ENCODE measurements at regions of chr6 and their contacts with region 1.

Region 1: DNA sequence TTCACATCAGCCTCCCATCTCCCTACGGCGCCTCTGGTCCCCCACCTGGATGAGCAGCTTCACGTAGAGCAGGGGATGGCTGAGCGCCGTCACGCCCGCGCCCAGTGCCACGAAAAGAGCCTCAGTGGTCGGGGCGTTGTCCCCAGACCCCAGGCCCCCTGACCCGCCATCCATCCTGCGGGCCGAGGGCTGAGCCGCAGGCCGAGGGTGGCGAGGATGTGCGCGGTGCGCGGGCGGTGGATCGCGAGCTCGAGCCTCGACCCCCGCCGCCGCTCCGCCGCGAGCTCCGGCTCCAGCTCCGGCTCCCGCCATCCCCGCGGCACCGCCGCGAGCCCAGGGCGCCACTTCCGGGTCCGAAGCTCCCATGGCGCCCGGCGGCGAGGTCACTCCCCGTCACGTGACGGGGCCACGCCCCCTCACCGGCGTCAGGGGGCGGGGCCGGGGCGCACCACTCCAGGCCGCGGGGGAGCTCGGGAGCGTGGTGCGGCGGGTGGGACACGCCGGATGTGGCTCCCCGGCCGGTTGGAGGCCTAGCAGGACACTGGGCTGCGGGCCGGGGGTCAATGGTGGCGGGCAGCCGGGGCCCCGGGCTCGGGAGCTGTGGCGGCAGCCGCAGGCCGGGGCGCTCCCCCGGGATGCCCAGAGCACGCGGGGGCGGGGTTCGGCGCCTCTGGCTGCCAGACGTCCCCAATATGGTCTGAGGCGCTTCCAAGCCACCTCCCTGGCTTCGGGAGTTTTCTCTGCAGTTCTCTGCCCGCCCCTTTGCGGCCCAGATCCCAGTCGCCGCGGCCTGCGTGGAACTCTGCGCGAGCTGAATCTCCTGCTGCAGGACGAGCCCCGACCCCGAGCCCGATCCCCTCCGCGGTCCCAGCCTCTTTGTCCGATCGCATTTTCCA is at the start of gene MTCH1:
- DNase-seq: peak; percentile 64 to 91
- H3K4me3 ChIP-seq: peak within 1 kb of the TSS; percentile 99
- H3K27ac ChIP-seq: peak within 1 kb of the TSS; percentile 40
- H3K4me1 ChIP-seq: peaks cover 23% of the 10 kb centered on the region
- H3K27me3 ChIP-seq: no peaks in the 10 kb centered on the region
- CTCF ChIP-seq: 0 out of 2 replicates have a peak, but pooled peaks have one; percentile 3
- total RNA-seq, gene MTCH1: 236 and 241 TPM in 2 replicates

Region 2: GRCh38 chr6:36929607-36930006 is 56.4 kb before region 1 on chr6:
- CTCF ChIA-PET with region 1: no interaction called
- POLR2A ChIA-PET with region 1: interaction called, 16 read pairs
- intact Hi-C with region 1: loop called (anchors 2 kb)
- DNase-seq: peak in 1 of 2 experiments; percentile 69
- H3K4me3 ChIP-seq: no peak overlapping the region
- H3K27ac ChIP-seq: peak overlapping the region; percentile 4; the same call in 1 of the 2 replicates
- H3K4me1 ChIP-seq: peaks cover 49% of the 10 kb centered on the region
- H3K27me3 ChIP-seq: no peaks in the 10 kb centered on the region
- CTCF ChIP-seq: no peak

Region 3: DNA sequence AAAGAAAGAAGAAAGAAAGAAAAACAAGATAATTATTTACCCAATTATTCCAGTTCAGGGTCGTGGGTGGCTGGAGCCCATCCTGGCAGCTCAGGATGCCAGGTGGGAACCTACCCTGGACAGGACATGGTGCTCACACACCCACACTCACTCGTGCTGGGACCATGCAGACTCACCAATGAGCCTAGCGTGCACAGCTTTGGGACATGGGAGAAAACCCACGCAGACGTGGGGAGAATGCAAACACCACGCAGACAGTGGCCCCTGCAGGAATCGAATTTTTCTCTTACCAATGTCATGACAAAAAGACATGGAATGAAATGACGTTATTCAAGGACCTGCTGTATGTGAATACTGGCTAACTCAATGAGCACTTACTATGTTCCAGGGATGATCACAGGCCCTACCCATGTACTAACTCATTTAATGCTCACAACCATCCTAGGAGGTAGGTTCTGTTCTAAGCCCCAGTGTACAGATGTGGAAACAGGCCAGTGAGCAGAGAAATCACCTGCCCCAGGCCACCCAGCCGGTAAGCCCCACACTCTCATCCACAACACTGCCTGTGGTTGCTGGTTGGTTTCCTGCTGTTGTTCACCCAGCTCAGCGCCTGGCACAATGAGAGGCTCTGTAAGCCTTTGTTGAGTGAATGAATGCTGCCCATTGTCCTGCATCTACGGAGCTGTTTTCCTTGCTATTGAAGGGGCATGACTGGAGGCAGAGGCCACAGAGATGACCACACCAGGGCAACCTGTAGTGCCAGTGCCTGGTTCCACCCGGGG is 38.3 kb before region 1 on chr6:
- CTCF ChIA-PET with region 1: no interaction called
- POLR2A ChIA-PET with region 1: interaction called, 4 read pairs
- intact Hi-C with region 1: loop called (anchors 2 kb)
- DNase-seq: no peak
- H3K4me3 ChIP-seq: no peak overlapping the region
- H3K27ac ChIP-seq: no peak overlapping the region
- H3K4me1 ChIP-seq: peaks cover 35% of the 10 kb centered on the region
- H3K27me3 ChIP-seq: no peaks in the 10 kb centered on the region
- CTCF ChIP-seq: no peak

Region 4: GRCh38 chr6:37182736-37183590 is 196.9 kb after region 1 on chr6:
- CTCF ChIA-PET with region 1: no interaction called
- POLR2A ChIA-PET with region 1: no interaction called
- intact Hi-C with region 1: no loop called
- DNase-seq: no peak
- H3K4me3 ChIP-seq: no peak overlapping the region
- H3K27ac ChIP-seq: no peak overlapping the region
- H3K4me1 ChIP-seq: no peaks in the 10 kb centered on the region
- H3K27me3 ChIP-seq: no peaks in the 10 kb centered on the region
- CTCF ChIP-seq: no peak

Region 5: DNA sequence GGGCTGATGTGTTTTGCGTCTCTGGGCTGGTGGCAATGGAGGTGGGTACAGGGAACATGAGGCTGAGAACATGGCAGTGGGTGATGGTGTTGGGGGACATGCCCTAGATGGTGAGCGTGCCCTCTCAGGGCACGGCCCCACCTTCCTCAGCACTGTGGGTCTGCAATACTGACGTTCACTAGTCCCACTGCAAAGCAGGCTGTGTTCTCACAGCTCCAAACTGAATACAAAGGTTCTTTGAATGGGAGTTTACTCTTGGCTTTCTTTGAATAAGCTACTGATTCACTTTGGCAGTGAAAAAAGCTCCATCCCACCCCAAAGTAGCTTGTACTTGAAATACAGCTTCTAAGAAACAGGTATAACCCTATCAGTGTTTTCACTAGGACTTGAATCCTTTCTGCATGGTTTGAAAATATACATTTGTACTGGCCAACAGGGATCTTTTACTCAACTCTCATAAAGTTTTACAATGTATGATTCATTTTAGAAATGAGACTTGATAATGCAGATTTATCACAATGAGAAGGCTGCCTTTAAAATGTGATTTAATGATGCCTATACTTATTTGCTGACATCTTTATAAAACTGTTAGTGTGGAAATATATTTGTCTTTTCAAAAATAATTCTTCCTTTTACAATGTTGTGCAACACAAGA is 1234.1 kb after region 1 on chr6:
- CTCF ChIA-PET with region 1: no interaction called
- POLR2A ChIA-PET with region 1: interaction called, 11 read pairs
- intact Hi-C with region 1: no loop called
- DNase-seq: no peak
- H3K4me3 ChIP-seq: no peak overlapping the region
- H3K27ac ChIP-seq: no peak overlapping the region
- H3K4me1 ChIP-seq: no peaks in the 10 kb centered on the region
- H3K27me3 ChIP-seq: no peaks in the 10 kb centered on the region
- CTCF ChIP-seq: no peak

Measured in PC-9 (cell line).